ENCODE measurements at regions of chr1 and their contacts with region 1.

Region 1: DNA sequence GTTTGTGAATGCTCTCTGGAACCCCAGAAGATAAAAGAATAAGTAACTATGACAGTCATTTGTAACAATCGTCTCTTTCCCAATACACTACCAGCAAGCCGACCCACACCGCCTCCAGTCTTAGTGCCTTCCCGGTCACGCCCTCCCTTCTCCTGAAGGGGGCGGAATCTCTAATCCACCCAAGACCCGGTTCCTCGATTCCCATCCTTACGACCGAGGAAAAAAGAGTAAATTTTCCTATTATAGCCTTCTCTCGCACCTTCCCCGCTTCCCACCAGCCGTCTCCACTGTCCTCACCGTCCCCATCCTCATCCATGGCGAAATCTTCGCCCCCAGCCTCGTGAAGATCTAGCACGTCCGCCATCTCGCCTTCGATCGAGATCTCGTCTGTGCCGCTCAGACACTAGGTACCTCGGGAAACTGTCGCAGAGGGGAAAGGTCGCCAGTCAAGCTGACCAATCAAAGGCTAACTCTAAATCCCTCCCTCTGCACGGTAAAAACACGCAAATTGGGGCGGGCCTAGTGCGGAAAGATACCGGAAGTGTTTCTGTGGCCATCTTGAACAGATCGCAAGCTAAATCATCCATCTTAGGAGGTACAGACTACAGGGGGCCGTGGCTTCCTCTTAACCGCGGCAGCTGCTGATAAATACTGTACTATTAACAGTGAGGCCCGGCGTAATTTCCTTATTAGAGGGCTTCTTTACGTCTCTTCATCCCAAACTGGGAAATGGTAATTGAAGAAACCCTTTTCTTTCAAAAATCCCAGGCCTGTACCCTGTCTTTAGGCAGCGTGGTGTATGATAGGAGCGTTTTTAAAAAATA is at the start of gene RBM8A:
- DNase-seq: peak; percentile 72 to 98 (median 95)
- ATAC-seq: peak; percentile 94 to 96
- H3K4me3 Mint-ChIP-seq: peak within 1 kb of the TSS in 3 of 10 donors; percentile 43 to 80 (median 52)
- H3K27ac Mint-ChIP-seq: peak within 1 kb of the TSS in 2 of 10 donors; percentile 91 to 94
- H3K4me1 Mint-ChIP-seq: peaks cover 7 to 18% (median 16%) of the 10 kb centered on the region in 4 donors
- H3K27me3 Mint-ChIP-seq: no peaks in the 10 kb centered on the region
- polyA plus RNA-seq, gene RBM8A: 127 to 191 (median 148) TPM

Region 2: DNA sequence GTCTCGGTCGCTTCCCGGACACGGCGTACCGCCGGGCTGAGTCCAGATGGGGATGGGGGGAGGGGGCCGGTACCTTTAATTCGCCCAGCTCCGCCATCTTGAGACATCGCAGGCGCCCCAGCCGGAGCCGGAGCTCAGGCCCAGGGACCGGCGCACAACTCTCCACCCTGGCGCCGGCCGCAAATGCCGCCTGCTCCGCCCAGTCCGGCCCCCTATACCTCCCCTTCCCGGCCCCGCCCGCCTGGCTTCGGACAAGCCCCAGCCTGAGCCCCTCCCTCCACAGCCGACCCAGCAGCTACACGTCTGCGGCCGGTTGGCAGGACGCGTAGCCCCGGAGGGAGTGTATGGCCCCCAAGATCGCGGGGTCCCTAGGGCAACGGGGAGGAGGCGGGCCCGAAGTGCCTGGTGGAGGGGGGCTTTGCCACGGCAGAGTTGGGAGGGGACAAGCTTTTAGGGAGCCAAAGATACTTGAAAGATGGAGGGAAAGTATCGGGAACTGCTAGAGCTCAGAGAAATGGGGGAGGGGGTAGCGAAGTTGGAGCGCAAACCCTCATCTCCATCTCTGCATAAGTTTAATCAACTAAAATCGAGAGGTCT is 68.3 kb before region 1 on chr1 and contains the start of gene PIAS3:
- POLR2A ChIA-PET with region 1: interaction called, 41 read pairs
- DNase-seq: peak; percentile 66 to 87 (median 76)
- ATAC-seq: peak; percentile 79 to 88
- H3K4me3 Mint-ChIP-seq: peak within 1 kb of the TSS; percentile 95 to 99 (median 98)
- H3K27ac Mint-ChIP-seq: peak within 1 kb of the TSS; percentile 85 to 96 (median 95)
- H3K4me1 Mint-ChIP-seq: peaks cover 13 to 21% (median 14%) of the 10 kb centered on the region in 4 donors
- H3K27me3 Mint-ChIP-seq: peaks cover 0 to 4% (median 0%) of the 10 kb centered on the region in 5 donors
- polyA plus RNA-seq, gene PIAS3: 10.7 to 14.7 (median 12.4) TPM

Region 3: DNA sequence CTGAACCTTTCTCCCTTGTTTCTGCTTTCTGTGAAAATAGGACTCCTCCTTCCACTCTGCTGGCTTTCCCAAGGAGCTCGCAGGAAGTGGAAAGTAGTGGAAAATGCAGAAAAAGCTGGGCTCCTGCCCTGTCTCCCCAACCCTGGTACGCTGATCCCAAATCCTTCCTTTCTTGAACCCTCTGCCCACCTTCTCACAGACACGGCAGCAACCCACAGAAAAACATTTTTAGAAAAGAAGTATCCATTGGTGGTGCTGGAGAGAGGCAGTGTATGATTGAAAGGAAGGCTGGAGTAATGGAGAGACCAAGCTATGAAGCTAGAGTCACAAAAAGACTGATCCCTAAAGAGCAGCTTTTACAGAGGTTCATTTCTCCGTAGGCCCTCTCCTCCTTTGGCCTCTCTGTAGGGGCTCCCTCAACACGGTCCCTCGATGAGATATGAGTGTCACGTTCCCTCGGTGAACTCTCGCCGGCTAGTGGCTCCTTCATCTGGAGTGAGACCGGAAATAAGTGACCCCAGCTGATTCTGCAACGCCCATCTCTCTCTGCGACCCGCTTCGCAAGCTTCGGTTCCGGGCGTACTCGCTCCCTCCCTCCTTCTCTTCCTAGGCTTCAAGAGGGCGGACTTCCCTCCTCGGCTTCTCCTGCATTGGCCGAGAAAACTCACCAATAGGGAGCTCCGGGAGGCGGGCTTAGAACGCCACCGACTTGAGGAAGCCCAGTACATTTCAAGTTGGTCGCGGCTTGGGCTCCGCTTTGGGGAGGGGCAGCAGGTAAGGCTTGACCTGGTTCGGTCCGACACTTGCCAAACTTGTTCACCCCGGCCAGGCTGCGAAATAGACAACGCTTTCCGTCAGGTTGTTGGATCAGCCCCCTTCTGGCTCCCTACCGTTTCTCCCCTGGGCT is 37.0 kb after region 1 on chr1 and contains the starts of genes ANKRD34A and POLR3GL:
- POLR2A ChIA-PET with region 1: interaction called, 288 read pairs
- DNase-seq: peak; percentile 75 to 95 (median 89)
- ATAC-seq: peak; percentile 84 to 87
- H3K4me3 Mint-ChIP-seq: peak within 1 kb of the TSS; percentile 88 to 99 (median 92)
- H3K27ac Mint-ChIP-seq: peak within 1 kb of the TSS; percentile 86 to 99 (median 98)
- H3K4me1 Mint-ChIP-seq: peaks cover 39 to 68% (median 66%) of the 10 kb centered on the region in 4 donors
- H3K27me3 Mint-ChIP-seq: no peaks in the 10 kb centered on the region
- polyA plus RNA-seq, gene ANKRD34A: 0.12 to 0.38 (median 0.25) TPM
- polyA plus RNA-seq, gene POLR3GL: 98.4 to 101 (median 98.6) TPM

Region 4: DNA sequence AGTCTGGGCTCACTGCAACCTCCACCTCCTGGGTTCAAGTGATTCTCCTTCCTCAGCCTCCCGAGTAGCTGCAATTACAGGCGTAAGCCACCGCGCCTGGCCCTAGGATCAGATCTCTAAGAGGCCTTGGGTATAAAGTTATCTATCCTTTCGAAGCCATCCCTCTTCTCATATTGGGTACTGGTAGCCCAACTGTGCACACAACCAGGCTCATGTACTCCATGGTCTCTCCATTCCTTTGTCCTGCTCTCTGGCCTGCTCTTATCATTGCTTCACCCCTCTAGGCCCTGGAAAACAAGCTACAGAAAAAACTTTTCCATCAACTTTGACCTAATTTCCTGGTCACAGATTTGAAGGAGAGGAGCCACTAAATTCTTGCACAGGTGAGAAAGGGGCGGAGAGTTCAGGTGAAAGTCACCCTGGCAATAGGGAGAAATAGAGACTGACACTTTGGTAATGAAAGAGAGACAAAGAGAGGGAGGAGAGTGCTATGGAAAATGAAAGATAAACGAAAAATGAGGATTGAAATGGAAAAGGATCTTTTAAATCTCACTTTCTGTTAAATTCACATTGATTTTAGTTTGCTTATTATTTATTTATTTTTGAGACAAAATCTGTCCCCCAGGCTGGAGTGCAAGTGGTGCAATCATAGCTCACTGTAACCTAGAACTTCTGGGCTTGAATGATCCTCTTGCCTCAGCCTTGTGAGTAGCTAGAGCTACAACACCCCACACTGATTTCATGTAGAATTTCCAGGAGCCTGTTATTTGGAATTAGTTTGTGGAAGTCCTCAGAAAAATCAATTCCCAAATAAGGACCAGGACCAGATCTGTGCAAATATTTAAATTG is 63.2 kb after region 1 on chr1:
- POLR2A ChIA-PET with region 1: interaction called, 49 read pairs
- DNase-seq: no peak
- ATAC-seq: peak in 1 of 2 donors; percentile 4
- H3K4me3 Mint-ChIP-seq: peak overlapping the region in 8 of 10 donors; percentile 29 to 99 (median 77)
- H3K27ac Mint-ChIP-seq: peak overlapping the region; percentile 20 to 99 (median 90)
- H3K4me1 Mint-ChIP-seq: peaks cover 35 to 82% (median 67%) of the 10 kb centered on the region in 4 donors
- H3K27me3 Mint-ChIP-seq: no peaks in the 10 kb centered on the region

Region 5: GRCh38 chr1:146007506-146008133 is 80.3 kb after region 1 on chr1:
- POLR2A ChIA-PET with region 1: interaction called, 15 read pairs
- DNase-seq: no peak
- ATAC-seq: no peak
- H3K4me3 Mint-ChIP-seq: peak overlapping the region in 9 of 10 donors; percentile 76 to 89 (median 82)
- H3K27ac Mint-ChIP-seq: peak overlapping the region; percentile 83 to 100 (median 94)
- H3K4me1 Mint-ChIP-seq: peaks cover 20 to 51% (median 47%) of the 10 kb centered on the region in 4 donors
- H3K27me3 Mint-ChIP-seq: no peaks in the 10 kb centered on the region

Measured in naive thymus-derived CD8-positive, alpha-beta T cell (primary cell).